ENCODE measurements at regions of chr11 and their contacts with region 1.

Region 1: GRCh38 chr11:19076744-19077589 is 16.4 kb upstream of the MRGPRX2 start:
- DNase-seq: peak; percentile 67
- H3K4me3 Mint-ChIP-seq: no peak overlapping the region
- H3K27ac Mint-ChIP-seq: no peak overlapping the region
- H3K4me1 Mint-ChIP-seq: no peaks in the 10 kb centered on the region
- H3K27me3 Mint-ChIP-seq: peaks cover 16% of the 10 kb centered on the region

Region 2: DNA sequence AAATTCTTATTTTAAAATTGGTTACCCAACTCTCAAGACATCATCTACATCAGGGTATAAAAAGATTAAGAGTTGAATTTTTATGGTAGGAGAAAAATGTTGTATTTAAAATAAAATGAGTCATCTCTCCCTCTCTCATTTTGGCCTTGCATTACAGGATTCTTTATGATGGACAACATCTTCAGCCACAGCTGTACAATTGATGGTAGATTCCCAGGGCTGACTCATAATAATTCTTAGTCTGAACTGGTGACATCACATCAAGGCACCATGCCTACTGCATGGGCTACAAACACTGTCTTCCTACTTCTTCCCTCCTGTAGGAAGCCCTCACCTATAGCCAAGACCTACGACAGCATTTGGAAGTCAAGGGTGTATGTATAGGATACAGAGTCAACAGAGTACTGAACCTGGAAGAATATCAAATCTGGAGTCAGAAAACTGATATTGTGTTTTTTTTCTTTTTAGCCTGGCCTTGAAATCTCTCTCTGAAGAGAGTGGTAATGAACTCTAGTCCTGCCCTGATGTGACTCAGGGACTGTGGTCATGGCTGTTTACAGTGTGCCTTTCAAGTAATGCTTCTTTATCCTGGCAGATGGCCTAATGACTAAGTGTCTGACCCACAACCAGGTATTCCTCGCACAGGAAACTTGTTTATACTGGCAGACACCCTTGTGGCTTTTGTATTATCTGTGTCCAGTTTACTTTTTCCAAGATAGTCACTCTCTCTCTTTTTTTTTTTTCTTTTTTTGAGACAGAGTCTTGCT is 49.0 kb before region 1 on chr11:
- CTCF ChIA-PET with region 1: no interaction called
- DNase-seq: no peak
- H3K4me3 Mint-ChIP-seq: no peak overlapping the region
- H3K27ac Mint-ChIP-seq: no peak overlapping the region
- H3K4me1 Mint-ChIP-seq: no peaks in the 10 kb centered on the region
- H3K27me3 Mint-ChIP-seq: no peaks in the 10 kb centered on the region

Region 3: DNA sequence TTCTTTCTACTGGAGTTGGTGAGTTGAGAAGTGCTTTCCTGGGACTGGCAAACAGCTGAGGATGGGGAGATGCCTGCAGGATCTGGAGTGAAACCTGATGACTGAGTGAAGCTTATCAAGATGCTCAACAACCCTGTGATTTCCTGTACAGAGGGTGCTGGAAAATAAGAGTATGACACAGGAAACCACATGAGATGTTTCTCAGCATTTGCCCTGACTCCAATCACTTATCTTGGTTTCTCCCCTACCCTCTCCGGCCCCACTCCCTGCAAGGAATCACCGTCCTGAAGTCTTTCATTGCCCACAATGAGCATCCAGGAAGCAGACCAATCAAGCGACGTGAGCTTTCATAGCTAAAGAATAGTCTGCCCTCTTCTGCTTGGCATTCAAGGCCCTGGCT is 16.3 kb before region 1 on chr11 and contains the start of gene MRGPRX2:
- CTCF ChIA-PET with region 1: interaction called, 17 read pairs
- DNase-seq: no peak
- H3K4me3 Mint-ChIP-seq: no peak within 1 kb of the TSS
- H3K27ac Mint-ChIP-seq: no peak within 1 kb of the TSS
- H3K4me1 Mint-ChIP-seq: peaks cover 16% of the 10 kb centered on the region
- H3K27me3 Mint-ChIP-seq: peaks cover 8% of the 10 kb centered on the region

Region 4: DNA sequence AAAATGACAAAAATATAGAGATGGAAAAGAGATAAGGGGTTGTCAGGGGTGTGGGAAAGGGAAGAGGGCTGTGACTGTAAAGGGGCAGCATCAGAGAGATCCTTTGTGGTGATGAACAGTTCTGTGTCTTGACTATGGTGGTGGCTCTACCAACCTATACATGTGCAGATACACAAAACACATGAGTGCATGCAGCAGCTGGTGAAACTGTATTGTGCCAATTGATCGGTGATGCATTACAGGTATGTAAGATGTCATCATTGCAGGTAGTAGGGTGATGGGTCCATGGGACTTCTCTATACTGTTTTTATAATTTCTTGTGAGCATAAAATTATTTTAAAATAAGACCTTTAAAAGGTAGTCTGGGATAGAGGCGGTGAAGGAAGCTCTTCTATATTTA is 15.9 kb after region 1 on chr11:
- CTCF ChIA-PET with region 1: interaction called, 10 read pairs
- DNase-seq: no peak
- H3K4me3 Mint-ChIP-seq: no peak overlapping the region
- H3K27ac Mint-ChIP-seq: no peak overlapping the region
- H3K4me1 Mint-ChIP-seq: no peaks in the 10 kb centered on the region
- H3K27me3 Mint-ChIP-seq: peaks cover 32% of the 10 kb centered on the region

Region 5: DNA sequence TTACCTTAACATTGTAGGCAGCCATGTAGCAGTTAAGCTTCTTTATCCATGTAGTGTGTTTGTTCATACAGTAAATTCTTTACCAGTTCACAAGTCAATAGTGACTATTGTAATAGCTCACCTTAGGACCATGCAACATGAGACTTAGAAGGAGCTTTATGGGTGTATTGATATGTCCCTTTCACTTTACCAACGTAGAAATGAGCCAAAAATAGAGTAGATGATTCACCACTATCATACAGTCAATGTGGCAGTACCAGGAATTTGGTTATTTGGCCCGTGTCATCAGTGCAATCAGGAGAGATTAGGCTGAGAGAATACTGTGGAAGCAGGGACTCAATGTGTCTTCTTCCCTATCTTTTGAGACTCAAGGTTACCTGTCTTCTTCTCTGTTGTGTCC is 44.7 kb after region 1 on chr11:
- CTCF ChIA-PET with region 1: interaction called, 10 read pairs
- DNase-seq: no peak
- H3K4me3 Mint-ChIP-seq: no peak overlapping the region
- H3K27ac Mint-ChIP-seq: no peak overlapping the region
- H3K4me1 Mint-ChIP-seq: peaks cover 46% of the 10 kb centered on the region
- H3K27me3 Mint-ChIP-seq: no peaks in the 10 kb centered on the region

Region 6: GRCh38 chr11:19366992-19367709 is 290.2 kb after region 1 on chr11:
- CTCF ChIA-PET with region 1: no interaction called
- DNase-seq: no peak
- H3K4me3 Mint-ChIP-seq: no peak overlapping the region
- H3K27ac Mint-ChIP-seq: no peak overlapping the region
- H3K4me1 Mint-ChIP-seq: no peaks in the 10 kb centered on the region
- H3K27me3 Mint-ChIP-seq: peaks cover 8% of the 10 kb centered on the region

Measured in activated naive CD4-positive, alpha-beta T cell treated with anti-CD3 and anti-CD28 coated beads, Interleukin-2, amount 10 ng/mL, durations not matched to agents 7 days and 5 days (primary cell).